ENCODE measurements at regions of chr12 and their contacts with region 1.

Region 1: GRCh38 chr12:54526812-54527630 is 22.4 kb upstream of the PDE1B start:
- DNase-seq: peak; percentile 46
- ATAC-seq: no peak
- H3K4me3 Mint-ChIP-seq: no peak overlapping the region
- H3K27ac Mint-ChIP-seq: no peak overlapping the region
- H3K4me1 Mint-ChIP-seq: no peaks in the 10 kb centered on the region
- H3K27me3 Mint-ChIP-seq: no peaks in the 10 kb centered on the region

Region 2: DNA sequence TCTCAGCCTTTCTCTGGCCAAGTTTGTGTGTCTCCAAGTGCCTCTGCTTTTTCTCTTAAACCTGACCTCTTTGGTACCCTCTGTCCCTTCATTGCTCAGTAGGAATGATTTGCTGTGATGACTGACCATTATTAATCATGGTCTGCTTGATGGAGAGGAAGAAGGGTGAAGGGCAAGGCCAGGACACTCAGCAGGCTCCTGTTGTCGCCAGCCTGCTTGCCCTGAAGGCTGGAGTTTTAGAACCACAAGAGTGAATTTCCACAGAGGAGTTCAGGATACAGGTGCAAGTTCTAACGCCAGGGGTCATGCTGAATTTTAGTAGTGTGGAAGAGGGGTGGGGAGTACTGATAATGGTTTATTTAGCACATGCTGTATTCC is 105.2 kb before region 1 on chr12:
- CTCF ChIA-PET with region 1: no interaction called
- POLR2A ChIA-PET with region 1: no interaction called
- DNase-seq: no peak
- ATAC-seq: no peak
- H3K4me3 Mint-ChIP-seq: no peak overlapping the region
- H3K27ac Mint-ChIP-seq: peak overlapping the region; percentile 44
- H3K4me1 Mint-ChIP-seq: peaks cover 30% of the 10 kb centered on the region
- H3K27me3 Mint-ChIP-seq: peaks cover 48% of the 10 kb centered on the region

Region 3: GRCh38 chr12:54497883-54498282 is 29.1 kb before region 1 on chr12:
- CTCF ChIA-PET with region 1: interaction called, 12 read pairs
- POLR2A ChIA-PET with region 1: no interaction called
- DNase-seq: no peak
- ATAC-seq: no peak
- H3K4me3 Mint-ChIP-seq: peak overlapping the region; percentile 96
- H3K27ac Mint-ChIP-seq: peak overlapping the region; percentile 95
- H3K4me1 Mint-ChIP-seq: peaks cover 43% of the 10 kb centered on the region
- H3K27me3 Mint-ChIP-seq: no peaks in the 10 kb centered on the region

Region 4: GRCh38 chr12:54541751-54542290 is 14.8 kb after region 1 on chr12:
- CTCF ChIA-PET with region 1: interaction called, 17 read pairs
- POLR2A ChIA-PET with region 1: no interaction called
- DNase-seq: no peak
- ATAC-seq: no peak
- H3K4me3 Mint-ChIP-seq: no peak overlapping the region
- H3K27ac Mint-ChIP-seq: no peak overlapping the region
- H3K4me1 Mint-ChIP-seq: no peaks in the 10 kb centered on the region
- H3K27me3 Mint-ChIP-seq: no peaks in the 10 kb centered on the region

Region 5: GRCh38 chr12:54560374-54560858 is 33.4 kb after region 1 on chr12:
- CTCF ChIA-PET with region 1: interaction called, 11 read pairs
- POLR2A ChIA-PET with region 1: no interaction called
- DNase-seq: peak; percentile 90
- ATAC-seq: peak; percentile 100
- H3K4me3 Mint-ChIP-seq: peak overlapping the region; percentile 67
- H3K27ac Mint-ChIP-seq: peak overlapping the region; percentile 78
- H3K4me1 Mint-ChIP-seq: peaks cover 27% of the 10 kb centered on the region
- H3K27me3 Mint-ChIP-seq: no peaks in the 10 kb centered on the region